Uterus (tissue), 4 donors: ENCODE measurements at regions of chr1 and their contacts with region 1.

Region 1: GRCh38 chr1:71049951-71050598 is 2.5 kb upstream of the PTGER3 start:
- DNase-seq: peak in 1 of 2 donors; percentile 29
- H3K4me3 ChIP-seq: no peak overlapping the region
- H3K27ac ChIP-seq: no peak overlapping the region
- H3K4me1 ChIP-seq: no peaks in the 10 kb centered on the region
- H3K27me3 ChIP-seq: no peaks in the 10 kb centered on the region
- CTCF ChIP-seq: peak; percentile 72 to 86 (median 78)
- POLR2A ChIP-seq: no peak

Region 2: GRCh38 chr1:70436622-70437251 is 613.3 kb before region 1 on chr1:
- intact Hi-C with region 1: loop called (anchors 10 kb)
- DNase-seq: peak; percentile 35 to 46
- H3K4me3 ChIP-seq: no peak overlapping the region
- H3K27ac ChIP-seq: peak overlapping the region; percentile 32 to 67
- H3K4me1 ChIP-seq: no peaks in the 10 kb centered on the region
- H3K27me3 ChIP-seq: no peaks in the 10 kb centered on the region
- CTCF ChIP-seq: peak; percentile 58 to 75 (median 65)
- POLR2A ChIP-seq: no peak

Region 3: DNA sequence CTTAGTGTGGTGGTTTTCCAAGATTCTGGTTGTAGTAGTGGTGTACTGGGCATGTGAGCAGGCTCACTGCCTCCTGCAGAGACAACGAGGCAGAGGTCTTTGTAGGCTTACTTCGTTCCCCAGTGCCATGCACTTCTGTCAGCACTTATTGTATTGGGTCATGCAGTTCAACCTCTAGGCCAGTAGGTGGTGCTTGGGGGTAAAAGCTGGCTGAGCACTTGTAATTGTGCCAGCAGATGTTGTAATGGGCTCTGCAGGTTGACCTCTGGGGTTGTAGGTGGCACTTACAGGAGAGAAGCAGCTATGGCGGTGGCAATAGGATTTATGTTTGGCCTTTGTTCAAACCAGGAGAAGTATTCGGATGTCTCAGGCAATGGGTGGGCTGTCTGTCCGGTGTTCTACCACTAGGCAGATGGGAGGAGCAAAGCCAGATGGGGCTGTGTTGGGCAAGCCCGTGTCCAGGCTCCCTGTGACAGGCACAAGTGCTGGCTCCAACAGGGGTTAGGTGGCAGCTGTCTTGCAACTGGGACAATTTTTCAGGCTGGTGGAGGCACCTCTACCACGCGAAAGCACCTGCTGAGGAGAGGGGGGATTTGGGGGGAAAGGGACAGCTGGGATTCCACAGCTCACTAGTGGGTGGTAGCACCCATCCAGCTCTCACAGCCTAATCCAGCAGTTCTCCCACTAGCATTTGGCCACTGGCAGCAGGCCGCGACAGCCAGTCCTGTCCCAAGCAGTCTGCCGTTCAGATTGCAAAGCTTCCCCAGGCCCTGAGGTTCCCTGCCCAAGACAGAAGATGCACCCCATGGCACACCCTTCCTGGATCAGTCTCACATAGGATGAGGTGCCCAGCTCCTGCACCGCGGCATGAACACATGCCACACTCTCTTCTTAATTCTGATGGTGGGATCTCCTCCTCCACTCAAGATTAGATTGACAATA is 364.5 kb before region 1 on chr1:
- intact Hi-C with region 1: loop called (anchors 10 kb)
- DNase-seq: peak; percentile 60 to 68
- H3K4me3 ChIP-seq: no peak overlapping the region
- H3K27ac ChIP-seq: no peak overlapping the region
- H3K4me1 ChIP-seq: no peaks in the 10 kb centered on the region
- H3K27me3 ChIP-seq: no peaks in the 10 kb centered on the region
- CTCF ChIP-seq: peak; percentile 58 to 84 (median 76)
- POLR2A ChIP-seq: no peak

Region 4: GRCh38 chr1:71273334-71273733 is 223.3 kb after region 1 on chr1:
- intact Hi-C with region 1: no loop called
- DNase-seq: no peak
- H3K4me3 ChIP-seq: no peak overlapping the region
- H3K27ac ChIP-seq: no peak overlapping the region
- H3K4me1 ChIP-seq: no peaks in the 10 kb centered on the region
- H3K27me3 ChIP-seq: no peaks in the 10 kb centered on the region
- CTCF ChIP-seq: no peak
- POLR2A ChIP-seq: no peak